Activated B cell treated with CpG ODN at 0.5 μM for 24 hours (primary cell): ENCODE measurements at regions of chr12 and their contacts with region 1.

Region 1: GRCh38 chr12:124453419-124454351 is 113.7 kb downstream of the NCOR2 start:
- DNase-seq: peak; percentile 67
- ATAC-seq: peak; percentile 68
- H3K4me3 Mint-ChIP-seq: peak overlapping the region; percentile 69
- H3K27ac Mint-ChIP-seq: peak overlapping the region; percentile 76
- H3K4me1 Mint-ChIP-seq: peaks cover 75% of the 10 kb centered on the region
- H3K27me3 Mint-ChIP-seq: no peaks in the 10 kb centered on the region
- CTCF ChIP-seq: no peak

Region 2: GRCh38 chr12:124391340-124392261 is 62.1 kb before region 1 on chr12:
- CTCF ChIA-PET with region 1: interaction called, 3 read pairs
- POLR2A ChIA-PET with region 1: interaction called, 13 read pairs
- intact Hi-C with region 1: loop called (anchors 1 kb)
- DNase-seq: peak; percentile 73
- ATAC-seq: peak; percentile 77
- H3K4me3 Mint-ChIP-seq: peak overlapping the region; percentile 83
- H3K27ac Mint-ChIP-seq: peak overlapping the region; percentile 79
- H3K4me1 Mint-ChIP-seq: peaks cover 47% of the 10 kb centered on the region
- H3K27me3 Mint-ChIP-seq: no peaks in the 10 kb centered on the region
- CTCF ChIP-seq: no peak

Region 3: GRCh38 chr12:124477107-124477915 is 23.6 kb after region 1 on chr12:
- CTCF ChIA-PET with region 1: interaction called, 3 read pairs
- POLR2A ChIA-PET with region 1: interaction called, 13 read pairs
- intact Hi-C with region 1: loop called (anchors 1 kb)
- DNase-seq: no peak
- ATAC-seq: peak; percentile 68
- H3K4me3 Mint-ChIP-seq: peak overlapping the region; percentile 57
- H3K27ac Mint-ChIP-seq: peak overlapping the region; percentile 75
- H3K4me1 Mint-ChIP-seq: peaks cover 55% of the 10 kb centered on the region
- H3K27me3 Mint-ChIP-seq: no peaks in the 10 kb centered on the region
- CTCF ChIP-seq: no peak

Region 4: GRCh38 chr12:124680863-124681778 is 227.4 kb after region 1 on chr12:
- CTCF ChIA-PET with region 1: no interaction called
- POLR2A ChIA-PET with region 1: no interaction called
- intact Hi-C with region 1: loop called (anchors 1 kb)
- DNase-seq: peak; percentile 26
- ATAC-seq: peak; percentile 96
- H3K4me3 Mint-ChIP-seq: no peak overlapping the region
- H3K27ac Mint-ChIP-seq: no peak overlapping the region
- H3K4me1 Mint-ChIP-seq: peaks cover 14% of the 10 kb centered on the region
- H3K27me3 Mint-ChIP-seq: peaks cover 6% of the 10 kb centered on the region
- CTCF ChIP-seq: no peak

Region 5: DNA sequence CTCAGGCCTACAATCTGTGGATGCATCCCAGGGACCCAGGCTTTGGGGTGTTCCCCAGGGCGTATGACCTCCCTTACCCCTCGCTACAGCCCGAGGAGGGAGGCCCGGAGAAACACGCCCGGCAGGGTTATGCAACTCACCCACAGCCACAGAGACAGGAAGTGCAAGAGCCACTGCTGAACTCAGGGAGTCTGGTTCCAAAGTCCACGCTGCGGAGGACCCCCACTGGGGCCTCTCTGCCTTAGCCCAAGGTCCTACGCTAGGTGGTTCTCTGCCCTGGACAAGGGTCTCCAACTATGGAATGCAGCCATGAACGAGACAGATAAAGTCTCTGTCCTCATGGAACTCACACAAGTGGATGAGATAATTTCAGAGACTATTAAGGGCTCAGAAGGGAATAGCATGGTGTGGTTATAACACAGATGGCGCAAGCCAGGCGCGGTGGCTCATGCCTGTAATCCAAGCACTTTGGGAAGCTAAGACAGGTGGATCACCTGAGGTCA is 398.7 kb after region 1 on chr12:
- CTCF ChIA-PET with region 1: no interaction called
- POLR2A ChIA-PET with region 1: no interaction called
- intact Hi-C with region 1: no loop called
- DNase-seq: no peak
- ATAC-seq: no peak
- H3K4me3 Mint-ChIP-seq: no peak overlapping the region
- H3K27ac Mint-ChIP-seq: no peak overlapping the region
- H3K4me1 Mint-ChIP-seq: peaks cover 25% of the 10 kb centered on the region
- H3K27me3 Mint-ChIP-seq: no peaks in the 10 kb centered on the region
- CTCF ChIP-seq: no peak

Region 6: GRCh38 chr12:124917135-124917840 is 463.6 kb after region 1 on chr12:
- CTCF ChIA-PET with region 1: no interaction called
- POLR2A ChIA-PET with region 1: interaction called, 3 read pairs
- intact Hi-C with region 1: loop called (anchors 2 kb)
- DNase-seq: peak; percentile 77
- ATAC-seq: peak; percentile 63
- H3K4me3 Mint-ChIP-seq: peak overlapping the region; percentile 100
- H3K27ac Mint-ChIP-seq: peak overlapping the region; percentile 100
- H3K4me1 Mint-ChIP-seq: peaks cover 91% of the 10 kb centered on the region
- H3K27me3 Mint-ChIP-seq: no peaks in the 10 kb centered on the region
- CTCF ChIP-seq: no peak